ENCODE measurements at regions of chr4 and their contacts with region 1.

Region 1: DNA sequence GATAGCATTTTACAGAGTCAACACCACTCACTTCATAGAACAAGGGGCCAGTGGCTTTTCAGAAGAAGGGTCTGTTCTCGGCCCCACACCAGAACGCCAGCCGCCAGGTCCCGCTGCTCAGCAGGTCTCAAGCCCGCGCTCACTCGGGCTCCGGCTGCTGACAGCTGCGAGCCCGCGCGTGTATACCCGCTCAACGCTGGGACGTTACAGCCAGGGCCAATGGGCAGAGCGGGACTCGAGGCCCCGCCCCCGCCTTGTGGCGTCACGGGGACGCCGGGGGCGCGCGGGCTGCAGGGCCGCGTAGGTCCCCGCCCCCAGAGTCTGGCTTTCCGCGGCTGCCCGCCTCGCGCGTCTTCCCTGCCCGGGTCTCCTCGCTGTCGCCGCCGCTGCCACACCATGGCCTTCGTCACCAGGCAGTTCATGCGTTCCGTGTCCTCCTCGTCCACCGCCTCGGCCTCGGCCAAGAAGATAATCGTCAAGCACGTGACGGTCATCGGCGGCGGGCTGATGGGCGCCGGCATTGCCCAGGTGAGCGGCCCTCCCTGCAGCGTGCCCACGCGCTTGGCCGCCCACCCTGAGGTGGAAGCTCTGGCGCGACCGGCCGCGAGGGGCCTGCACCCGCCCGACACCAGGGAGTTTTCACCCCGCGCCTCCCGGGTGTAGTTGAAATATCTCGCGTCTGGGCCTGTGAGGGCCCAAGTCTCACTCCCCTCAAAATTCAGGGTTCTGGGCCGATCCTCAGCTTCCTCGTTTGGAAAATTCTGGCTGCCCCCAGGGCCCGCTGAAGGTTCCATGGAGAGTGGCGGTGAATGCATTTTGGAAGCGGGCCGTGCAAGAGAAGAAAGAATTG is at the start of gene HADH:
- DNase-seq: peak; percentile 91 to 92
- H3K4me3 ChIP-seq: peak within 1 kb of the TSS; percentile 83 to 97
- H3K27ac ChIP-seq: peak within 1 kb of the TSS; percentile 94 to 95
- H3K4me1 ChIP-seq: peaks cover 0 to 4% of the 10 kb centered on the region in 2 donors
- H3K27me3 ChIP-seq: no peaks in the 10 kb centered on the region
- CTCF ChIP-seq: no peak
- POLR2A ChIP-seq: peak; percentile 91 to 94
- total RNA-seq, gene HADH: 32.0 to 63.5 (median 50.0) TPM

Region 2: DNA sequence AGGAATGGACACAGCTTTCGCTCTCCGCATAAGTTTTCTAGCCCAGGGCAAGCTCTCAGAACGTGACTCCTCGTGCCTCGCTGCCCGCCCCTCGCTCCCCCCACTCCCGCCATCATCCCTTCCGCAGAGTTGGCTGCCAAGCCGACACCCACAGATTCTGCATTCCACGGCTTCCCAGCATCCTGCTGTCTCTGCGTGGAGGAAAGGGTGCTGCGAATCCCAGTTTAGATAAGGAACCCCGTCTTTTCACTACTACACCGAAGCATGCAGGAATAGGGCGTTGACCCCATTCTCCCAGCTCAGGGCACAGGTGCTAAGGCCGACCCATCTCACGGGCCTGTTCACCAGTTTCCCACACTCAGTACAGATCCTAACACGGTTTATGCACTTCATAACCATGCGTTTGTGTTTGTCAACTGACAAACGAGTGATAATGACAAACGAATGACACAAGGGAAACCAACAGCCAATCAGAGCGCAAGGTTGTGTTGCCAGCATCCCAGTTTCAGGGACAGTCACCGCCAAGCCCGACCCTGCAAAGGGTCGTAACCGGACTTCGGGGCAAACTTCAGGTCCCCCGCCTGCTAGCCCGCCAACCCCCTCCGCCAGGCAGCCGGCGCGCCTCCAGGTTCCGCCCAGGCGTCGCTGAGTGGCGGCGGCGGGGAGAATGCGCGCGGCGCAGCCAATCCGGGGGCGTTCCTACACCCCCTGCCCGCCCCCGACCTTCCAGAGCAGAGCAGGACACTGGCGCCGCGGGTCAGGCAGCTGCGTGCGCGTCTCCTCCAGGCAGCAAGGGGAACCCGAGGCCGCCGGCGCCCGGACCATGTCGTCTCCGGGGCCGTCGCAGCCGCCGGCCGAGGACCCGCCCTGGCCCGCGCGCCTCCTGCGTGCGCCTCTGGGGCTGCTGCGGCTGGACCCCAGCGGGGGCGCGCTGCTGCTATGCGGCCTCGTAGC is 58.7 kb before region 1 on chr4 and contains the start of gene CYP2U1:
- intact Hi-C with region 1: loop called (anchors 10 kb)
- DNase-seq: peak; percentile 84 to 87
- H3K4me3 ChIP-seq: peak within 1 kb of the TSS; percentile 64 to 74
- H3K27ac ChIP-seq: peak within 1 kb of the TSS; percentile 86 to 89
- H3K4me1 ChIP-seq: peaks cover 0 to 10% of the 10 kb centered on the region in 2 donors
- H3K27me3 ChIP-seq: no peaks in the 10 kb centered on the region
- CTCF ChIP-seq: peak in 2 of 4 experiments; percentile 45 to 48
- POLR2A ChIP-seq: peak; percentile 66 to 74
- total RNA-seq, gene CYP2U1: 14.7 to 32.0 (median 20.5) TPM